ENCODE measurements at regions of chr1 and their contacts with region 1.

Region 1: DNA sequence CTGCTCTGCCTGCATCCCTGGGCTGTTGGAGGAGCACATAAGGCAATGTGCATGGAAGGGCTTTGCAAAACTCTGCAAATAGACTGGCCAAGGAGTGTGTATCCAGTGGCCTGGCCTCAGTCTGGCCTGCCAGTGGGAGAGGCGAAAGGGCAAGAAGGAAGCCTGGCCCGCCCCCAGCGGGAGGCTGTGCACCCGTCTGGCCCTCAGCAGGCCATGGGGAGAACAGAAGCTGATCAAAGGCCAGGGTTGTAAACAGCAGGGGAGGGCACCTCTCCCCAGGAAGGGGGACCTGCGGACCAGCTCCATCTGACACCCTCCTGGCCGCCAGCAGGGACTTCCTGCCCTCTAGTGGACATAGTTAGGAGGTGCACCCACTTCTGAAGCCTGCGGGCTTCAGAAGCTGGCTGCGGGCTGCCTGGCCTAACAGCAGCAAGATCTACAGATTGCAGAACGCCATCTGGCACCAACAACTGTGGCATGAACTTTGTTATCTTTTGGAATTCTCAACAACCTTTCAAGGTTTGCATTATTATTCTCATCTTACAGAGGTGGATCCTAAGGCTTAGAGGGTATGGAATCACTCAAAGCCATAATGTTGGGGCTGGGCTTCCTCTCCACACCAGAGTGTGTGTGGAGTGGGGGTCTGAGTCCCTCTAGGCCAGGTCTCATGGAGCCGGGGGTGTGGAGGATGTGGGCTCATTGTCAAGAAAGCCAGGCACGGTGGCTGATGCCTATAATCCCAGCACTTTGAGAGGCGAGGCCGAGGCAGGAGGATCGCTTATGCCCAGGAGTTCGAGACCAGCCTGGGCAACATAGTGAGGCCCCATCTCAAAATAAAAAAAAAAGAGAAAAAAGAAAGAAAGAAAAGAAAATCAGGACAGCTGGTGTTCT is 18.9 kb upstream of the CDK18 start:
- DNase-seq: peak; percentile 30 to 89 (median 75)

Region 2: GRCh38 chr1:205335643-205336091 is 149.9 kb before region 1 on chr1:
- intact Hi-C with region 1: loop called (anchors 5 kb)
- DNase-seq: peak; percentile 70 to 95 (median 88)

Region 3: GRCh38 chr1:205396967-205397616 is 88.5 kb before region 1 on chr1:
- intact Hi-C with region 1: loop called (anchors 10 kb)
- DNase-seq: peak in 15 of 42 donors; percentile 9 to 62 (median 29)

Region 4: GRCh38 chr1:205407970-205408369 is 77.6 kb before region 1 on chr1:
- intact Hi-C with region 1: no loop called
- DNase-seq: peak in 1 of 42 donors; percentile 3

Region 5: DNA sequence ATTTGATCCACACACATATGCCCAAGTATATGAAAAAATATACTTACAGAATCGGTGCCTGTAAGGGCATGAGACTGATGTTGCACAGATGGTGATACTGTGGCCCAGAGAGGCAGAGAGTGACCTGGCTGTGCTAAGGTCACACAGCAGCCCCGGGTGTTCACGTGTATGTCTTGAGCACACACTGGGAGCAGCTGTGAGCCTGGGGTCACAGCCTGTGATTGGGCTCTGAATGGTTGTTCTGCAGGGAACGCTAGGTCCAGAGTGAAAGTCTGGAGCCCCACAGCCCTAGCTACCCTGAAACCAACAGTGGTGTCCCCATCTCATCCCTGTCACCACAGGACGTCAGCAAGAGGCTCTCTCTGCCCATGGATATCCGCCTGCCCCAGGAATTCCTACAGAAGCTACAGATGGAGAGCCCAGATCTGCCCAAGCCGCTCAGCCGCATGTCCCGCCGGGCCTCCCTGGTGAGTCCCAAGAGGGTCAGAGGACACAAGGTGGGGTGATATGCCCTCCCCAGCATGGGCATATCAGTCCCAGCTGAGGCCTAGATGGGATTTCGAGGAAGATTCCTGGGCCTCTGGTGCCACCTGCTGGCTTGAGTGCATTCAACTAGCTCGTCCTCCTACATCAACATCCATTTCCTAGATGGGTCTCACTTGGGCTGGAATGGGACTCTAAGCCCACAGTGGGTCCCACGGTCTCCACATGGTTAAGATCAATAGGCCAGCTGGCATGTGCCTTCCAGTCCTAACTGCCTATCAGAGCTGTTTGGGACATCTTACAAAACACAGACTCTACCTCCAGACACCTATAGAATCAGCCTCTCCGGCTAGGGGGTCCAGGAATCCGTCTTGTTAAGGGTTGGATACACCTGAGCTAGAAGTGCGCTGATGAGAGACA is 38.6 kb after region 1 on chr1:
- intact Hi-C with region 1: loop called (anchors 2 kb)
- DNase-seq: peak; percentile 72 to 97 (median 91)

Region 6: DNA sequence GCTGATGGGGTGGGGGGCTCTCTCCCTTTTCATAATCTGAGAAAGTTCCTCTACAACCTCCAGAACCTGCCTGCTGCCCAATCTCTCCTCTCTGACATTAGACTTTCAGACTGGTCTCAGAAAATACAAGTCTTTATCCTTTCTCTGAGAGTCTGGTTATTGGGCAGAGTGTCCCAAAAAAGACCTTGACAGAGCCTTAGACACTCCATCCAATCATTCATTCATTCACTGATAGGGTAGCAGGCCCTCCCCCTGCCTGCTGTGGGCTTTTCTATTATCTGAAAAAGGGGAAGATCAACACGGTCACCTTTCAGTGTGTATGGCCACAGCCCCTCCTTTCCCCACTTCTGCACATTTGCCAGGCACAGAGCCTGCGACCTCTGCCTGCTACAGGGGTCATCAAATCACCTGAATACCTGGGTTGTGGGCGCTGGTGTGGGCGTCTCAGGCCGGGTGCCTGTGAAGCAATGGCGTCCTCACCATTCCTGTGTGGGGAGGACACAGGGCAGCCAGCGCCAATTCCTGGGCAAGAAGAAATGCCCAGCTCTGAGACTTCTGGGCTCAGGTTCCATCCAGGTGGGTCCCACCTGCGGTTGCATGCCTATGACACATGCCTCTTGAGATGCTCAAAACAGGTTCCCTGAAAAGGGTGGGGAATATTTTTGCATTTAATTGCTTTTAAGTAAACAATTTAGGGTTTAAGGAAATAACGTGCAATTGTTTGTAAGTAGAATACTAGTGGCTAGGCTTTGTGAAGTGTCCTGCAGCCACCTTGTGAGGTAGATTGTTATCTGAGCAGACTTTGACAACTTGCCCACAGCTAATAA is 93.4 kb after region 1 on chr1:
- intact Hi-C with region 1: no loop called
- DNase-seq: peak in 4 of 42 donors; percentile 5 to 34 (median 20)

Measured in head of caudate nucleus (tissue), 42 donors.